ENCODE measurements at regions of chr6 and their contacts with region 1.

Region 1: GRCh38 chr6:2634139-2634964 is 116.4 kb downstream of the MYLK4 start:
- DNase-seq: peak; percentile 87
- CTCF ChIP-seq: peak; percentile 98

Region 2: GRCh38 chr6:1596088-1596852 is 1038.1 kb before region 1 on chr6:
- in situ Hi-C with region 1: loop called (anchors 25 kb)
- DNase-seq: peak; percentile 87
- CTCF ChIP-seq: peak; percentile 94